Psoas muscle (tissue), 8 donors: ENCODE measurements at regions of chr11 and their contacts with region 1.

Region 1: DNA sequence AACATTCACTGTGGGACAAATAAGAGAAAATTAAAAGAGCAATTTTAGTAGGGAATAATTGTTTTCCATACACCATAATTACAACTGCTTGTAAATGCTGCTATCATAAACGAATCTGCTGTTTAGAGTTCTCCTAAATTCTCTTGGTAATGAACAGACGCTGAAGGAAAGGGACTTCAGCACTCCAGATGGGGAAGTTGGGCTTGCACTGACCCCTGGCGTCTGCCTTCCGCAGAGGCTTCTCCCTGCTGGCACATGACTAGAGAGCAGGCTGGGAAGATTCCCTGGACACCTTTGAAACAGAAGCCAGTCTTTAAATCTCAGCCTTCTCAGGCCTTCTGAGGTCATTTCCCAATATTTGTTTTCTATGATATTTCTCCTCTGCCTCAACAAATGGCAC is 84.1 kb downstream of the NXPE2 start:
- DNase-seq: peak; percentile 60 to 87
- ATAC-seq: peak; percentile 85 to 98 (median 94)
- H3K4me3 ChIP-seq: no peak overlapping the region
- H3K27ac ChIP-seq: no peak overlapping the region
- H3K4me1 ChIP-seq: no peaks in the 10 kb centered on the region
- H3K27me3 ChIP-seq: no peaks in the 10 kb centered on the region
- CTCF ChIP-seq: peak; percentile 80

Region 2: GRCh38 chr11:114280696-114281095 is 481.7 kb before region 1 on chr11:
- intact Hi-C with region 1: loop called in 1 of 2 experiments (anchors 5 kb)
- DNase-seq: peak; percentile 60 to 73
- ATAC-seq: peak; percentile 62 to 91 (median 83)
- H3K4me3 ChIP-seq: no peak overlapping the region
- H3K27ac ChIP-seq: no peak overlapping the region
- H3K4me1 ChIP-seq: peaks cover 3% of the 10 kb centered on the region
- H3K27me3 ChIP-seq: peaks cover 0 to 5% (median 0%) of the 10 kb centered on the region in 3 donors
- CTCF ChIP-seq: peak; percentile 59

Region 3: GRCh38 chr11:114348200-114349191 is 413.9 kb before region 1 on chr11:
- intact Hi-C with region 1: loop called (anchors 5 kb)
- DNase-seq: no peak
- ATAC-seq: peak in 2 of 4 donors; percentile 68 to 75
- H3K4me3 ChIP-seq: no peak overlapping the region
- H3K27ac ChIP-seq: no peak overlapping the region
- H3K4me1 ChIP-seq: no peaks in the 10 kb centered on the region
- H3K27me3 ChIP-seq: no peaks in the 10 kb centered on the region
- CTCF ChIP-seq: peak; percentile 54

Region 4: DNA sequence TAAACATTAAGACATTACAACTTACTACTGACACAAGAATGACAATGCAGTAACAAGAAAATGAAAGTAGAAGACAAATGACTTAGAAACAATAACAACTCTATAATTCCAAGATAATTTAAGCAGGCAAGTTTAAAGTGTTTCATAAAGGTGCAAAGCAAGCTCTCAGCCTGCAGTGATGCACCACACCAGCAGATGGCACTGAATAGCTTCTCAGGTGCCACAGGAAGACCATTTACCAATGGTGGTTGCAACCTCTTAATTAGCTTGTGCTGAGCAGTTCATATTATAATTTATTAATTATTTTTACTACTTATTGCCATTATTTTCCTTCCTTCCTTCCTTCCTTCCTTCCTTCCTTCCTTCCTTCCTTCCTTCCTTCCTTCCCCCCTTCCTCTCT is 23.5 kb before region 1 on chr11:
- intact Hi-C with region 1: loop called (anchors 2 kb)
- DNase-seq: peak in 1 of 2 donors; percentile 57
- ATAC-seq: peak; percentile 59 to 83 (median 76)
- H3K4me3 ChIP-seq: no peak overlapping the region
- H3K27ac ChIP-seq: no peak overlapping the region
- H3K4me1 ChIP-seq: no peaks in the 10 kb centered on the region
- H3K27me3 ChIP-seq: peaks cover 0 to 1% (median 0%) of the 10 kb centered on the region in 3 donors
- CTCF ChIP-seq: peak; percentile 87